Ascending aorta (tissue), 2 donors: ENCODE measurements at regions of chr13 and their contacts with region 1.

Region 1: GRCh38 chr13:91348906-91349435 is 1.5 kb downstream of the MIR17HG start:
- DNase-seq: peak; percentile 41 to 97
- H3K4me3 ChIP-seq: peak overlapping the region; percentile 85 to 86
- H3K27ac ChIP-seq: peak overlapping the region; percentile 65 to 92
- H3K4me1 ChIP-seq: peaks cover 7 to 20% of the 10 kb centered on the region in 2 donors
- H3K27me3 ChIP-seq: no peaks in the 10 kb centered on the region
- CTCF ChIP-seq: peak; percentile 89 to 98 (median 90)

Region 2: GRCh38 chr13:91142572-91142971 is 206.4 kb before region 1 on chr13:
- intact Hi-C with region 1: loop called (anchors 5 kb)
- DNase-seq: no peak
- H3K4me3 ChIP-seq: no peak overlapping the region
- H3K27ac ChIP-seq: peak overlapping the region; percentile 60 to 70
- H3K4me1 ChIP-seq: peaks cover 0 to 22% of the 10 kb centered on the region in 2 donors
- H3K27me3 ChIP-seq: no peaks in the 10 kb centered on the region
- CTCF ChIP-seq: no peak

Region 3: DNA sequence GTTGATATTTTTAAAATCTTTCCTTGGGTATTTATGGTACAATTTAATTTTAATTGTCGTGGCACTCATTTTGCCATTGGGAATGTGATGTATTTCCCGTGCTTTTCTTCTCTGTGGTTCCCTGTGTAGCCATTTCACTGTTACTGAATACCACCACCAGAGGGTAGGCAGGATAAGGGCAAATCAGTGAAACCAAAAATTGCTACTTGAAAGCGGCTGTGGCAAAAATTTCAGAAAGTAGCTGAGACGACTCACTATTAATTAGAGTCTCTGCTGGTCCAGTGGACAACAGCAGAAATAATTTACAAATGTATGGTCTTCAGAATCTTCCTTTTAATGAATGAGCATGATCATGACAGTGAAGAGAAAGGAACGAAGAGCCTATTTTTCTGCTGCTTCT is 35.9 kb before region 1 on chr13:
- intact Hi-C with region 1: loop called (anchors 2 kb)
- DNase-seq: no peak
- H3K4me3 ChIP-seq: no peak overlapping the region
- H3K27ac ChIP-seq: no peak overlapping the region
- H3K4me1 ChIP-seq: no peaks in the 10 kb centered on the region
- H3K27me3 ChIP-seq: no peaks in the 10 kb centered on the region
- CTCF ChIP-seq: peak; percentile 38 to 65 (median 38)

Region 4: GRCh38 chr13:91398413-91399272 is 49.7 kb after region 1 on chr13 and contains the start of gene GPC5:
- intact Hi-C with region 1: loop called (anchors 2 kb)
- DNase-seq: peak; percentile 12 to 84
- H3K4me3 ChIP-seq: peak within 1 kb of the TSS; percentile 59 to 73
- H3K27ac ChIP-seq: no peak within 1 kb of the TSS
- H3K4me1 ChIP-seq: peaks cover 6 to 9% of the 10 kb centered on the region in 2 donors
- H3K27me3 ChIP-seq: no peaks in the 10 kb centered on the region
- CTCF ChIP-seq: no peak
- total RNA-seq, gene GPC5: not detected